ENCODE measurements at regions of chr17 and their contacts with region 1.

Region 1: DNA sequence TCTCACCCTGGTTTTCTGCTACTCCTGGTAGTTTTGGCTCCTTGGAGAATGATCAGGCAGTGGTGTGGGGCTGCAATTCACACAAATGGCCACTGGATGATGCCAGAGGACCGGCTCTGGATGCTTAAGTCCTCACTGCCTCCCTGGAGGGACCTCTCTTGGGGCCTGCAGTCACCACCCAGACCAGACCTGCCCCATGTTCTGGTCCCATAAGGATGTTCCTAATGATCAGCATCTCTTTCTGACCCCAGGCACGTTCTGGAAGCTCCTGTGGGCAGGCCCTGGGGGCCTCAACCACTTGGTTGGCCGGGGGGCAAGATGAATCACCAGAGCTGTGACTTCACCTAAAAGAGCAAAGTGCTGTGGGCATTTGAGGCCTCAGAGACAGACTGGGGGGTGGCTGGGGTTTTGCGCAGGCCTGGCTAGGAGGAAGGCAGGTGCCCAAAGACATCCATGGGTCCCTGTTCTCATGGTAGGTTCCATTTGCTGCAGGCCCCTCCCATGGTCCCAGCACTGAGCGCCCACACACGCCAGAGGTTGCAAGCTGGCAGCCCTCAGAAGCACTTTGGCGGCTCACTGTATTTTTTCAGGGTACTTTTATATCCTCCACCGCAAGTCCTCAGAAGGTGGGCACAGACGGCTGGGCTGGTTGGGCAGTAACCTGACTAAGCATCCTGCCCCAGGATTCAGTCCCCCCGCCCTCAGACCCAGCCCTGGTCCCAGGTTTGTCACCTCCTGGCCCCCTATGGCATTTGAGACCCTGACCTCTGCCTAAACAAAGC is 53.2 kb downstream of the NT5M start:
- DNase-seq: peak; percentile 47 to 84 (median 61)
- ATAC-seq: peak; percentile 84
- H3K4me3 ChIP-seq: no peak overlapping the region
- H3K4me3 Mint-ChIP-seq: no peak overlapping the region
- H3K27ac ChIP-seq: no peak overlapping the region
- H3K27ac Mint-ChIP-seq: no peak overlapping the region
- H3K4me1 ChIP-seq: peaks cover 5% of the 10 kb centered on the region
- H3K4me1 Mint-ChIP-seq: no peaks in the 10 kb centered on the region
- H3K27me3 ChIP-seq: peaks cover 0 to 2% of the 10 kb centered on the region in 2 experiments
- H3K27me3 Mint-ChIP-seq: peaks cover 3% of the 10 kb centered on the region
- CTCF ChIP-seq: peak; percentile 97

Region 2: DNA sequence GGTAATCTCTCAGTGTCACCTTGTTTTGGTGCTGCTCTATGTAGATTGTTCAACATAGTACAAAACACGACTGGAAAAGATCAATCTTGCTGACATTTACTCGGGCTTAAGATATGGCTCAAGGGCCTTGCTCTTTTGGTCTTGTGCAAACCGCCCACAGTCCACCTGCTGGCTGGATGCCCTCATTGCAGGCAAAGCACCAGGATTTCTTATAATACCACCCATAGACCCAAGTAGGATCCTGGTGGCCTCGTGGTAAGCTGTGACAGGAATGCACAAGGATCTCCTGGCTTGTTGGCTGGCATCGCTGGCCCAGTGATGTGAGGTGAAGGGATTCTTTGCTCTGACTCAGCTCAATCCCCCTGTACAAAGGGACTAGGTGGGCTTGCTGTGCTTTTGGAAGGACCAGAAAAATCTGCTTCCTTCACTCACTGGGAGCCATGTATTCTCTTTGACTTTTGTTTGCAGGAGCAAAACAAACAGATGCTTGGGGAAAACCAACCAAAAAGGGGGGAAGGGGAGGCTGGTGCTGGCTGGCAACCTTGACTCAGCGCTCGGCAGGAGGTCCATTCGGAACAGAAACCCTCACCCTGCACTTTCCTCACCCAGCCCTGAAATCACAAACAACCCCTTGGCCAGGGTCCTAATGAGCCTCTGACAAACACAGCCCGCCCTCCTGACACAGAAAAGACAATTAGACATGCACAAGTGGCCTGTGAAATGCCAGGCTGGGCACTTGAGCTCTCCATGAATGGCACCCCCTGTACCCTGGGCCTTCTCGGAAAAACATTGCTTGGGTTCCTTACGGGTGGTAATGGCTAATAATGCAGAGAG is 83.9 kb after region 1 on chr17:
- CTCF ChIA-PET with region 1: interaction called, 7 read pairs
- POLR2A ChIA-PET with region 1: interaction called, 3 read pairs
- intact Hi-C with region 1: loop called (anchors 1 kb)
- DNase-seq: peak; percentile 58 to 88 (median 73)
- ATAC-seq: peak; percentile 67
- H3K4me3 ChIP-seq: no peak overlapping the region
- H3K4me3 Mint-ChIP-seq: no peak overlapping the region
- H3K27ac ChIP-seq: no peak overlapping the region
- H3K27ac Mint-ChIP-seq: no peak overlapping the region
- H3K4me1 ChIP-seq: peaks cover 6% of the 10 kb centered on the region
- H3K4me1 Mint-ChIP-seq: peaks cover 11% of the 10 kb centered on the region
- H3K27me3 ChIP-seq: no peaks in the 10 kb centered on the region
- H3K27me3 Mint-ChIP-seq: no peaks in the 10 kb centered on the region
- CTCF ChIP-seq: peak; percentile 83

Region 3: DNA sequence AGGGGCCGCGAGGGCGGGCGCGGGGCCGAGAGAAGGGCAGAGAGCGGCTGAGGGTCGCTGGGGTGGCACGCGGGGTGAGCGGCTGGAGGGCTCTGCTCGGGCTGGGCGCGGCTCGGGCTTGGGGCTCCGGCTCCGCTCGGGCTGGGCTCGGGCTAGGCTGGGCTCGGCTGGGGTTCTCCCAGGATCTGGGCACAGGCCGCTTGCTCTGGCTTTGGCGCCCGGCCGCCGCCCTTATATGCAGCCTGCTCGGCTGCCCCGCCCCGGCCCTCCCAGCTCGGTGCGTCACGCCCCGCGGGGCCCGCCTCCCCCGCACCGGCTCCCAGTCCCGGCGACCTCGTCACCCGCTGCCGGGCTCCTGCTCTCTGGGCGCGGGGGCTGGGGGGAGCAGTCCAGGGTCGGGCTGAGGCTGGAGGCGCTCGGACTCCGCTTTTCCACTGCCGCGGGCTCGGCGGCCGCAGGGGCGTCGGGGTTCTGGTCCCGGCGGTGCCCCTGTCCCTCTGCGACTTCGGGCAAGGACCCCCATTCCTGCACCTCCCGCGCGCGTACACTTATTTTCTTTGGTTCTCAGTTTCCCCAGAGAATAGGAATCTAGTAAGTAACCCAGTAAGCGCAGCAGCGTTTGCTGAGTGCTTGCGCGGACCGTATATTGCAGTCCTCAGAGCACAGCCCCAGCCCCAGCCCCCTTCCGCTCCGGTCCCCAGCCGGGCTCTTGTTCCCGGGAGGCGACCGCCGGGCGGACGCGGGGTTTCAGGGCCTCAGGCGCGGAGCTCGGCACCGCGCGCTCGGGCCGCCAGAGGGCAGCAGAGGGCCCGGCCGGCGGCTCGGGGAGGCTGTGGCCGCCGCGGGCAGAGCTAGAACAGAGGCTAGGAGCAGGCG is 140.1 kb after region 1 on chr17 and contains the start of gene RASD1:
- CTCF ChIA-PET with region 1: interaction called, 4 read pairs
- POLR2A ChIA-PET with region 1: no interaction called
- intact Hi-C with region 1: loop called (anchors 1 kb)
- DNase-seq: peak; percentile 56 to 90 (median 72)
- ATAC-seq: peak; percentile 85
- H3K4me3 ChIP-seq: peak within 1 kb of the TSS; percentile 65
- H3K4me3 Mint-ChIP-seq: peak within 1 kb of the TSS; percentile 82
- H3K27ac ChIP-seq: no peak within 1 kb of the TSS
- H3K27ac Mint-ChIP-seq: no peak within 1 kb of the TSS
- H3K4me1 ChIP-seq: peaks cover 24% of the 10 kb centered on the region
- H3K4me1 Mint-ChIP-seq: peaks cover 7% of the 10 kb centered on the region
- H3K27me3 ChIP-seq: peaks cover 8 to 11% of the 10 kb centered on the region in 2 experiments
- H3K27me3 Mint-ChIP-seq: peaks cover 10% of the 10 kb centered on the region
- CTCF ChIP-seq: peak; percentile 92
- total RNA-seq, gene RASD1: 1.8 to 2.0 TPM

Region 4: DNA sequence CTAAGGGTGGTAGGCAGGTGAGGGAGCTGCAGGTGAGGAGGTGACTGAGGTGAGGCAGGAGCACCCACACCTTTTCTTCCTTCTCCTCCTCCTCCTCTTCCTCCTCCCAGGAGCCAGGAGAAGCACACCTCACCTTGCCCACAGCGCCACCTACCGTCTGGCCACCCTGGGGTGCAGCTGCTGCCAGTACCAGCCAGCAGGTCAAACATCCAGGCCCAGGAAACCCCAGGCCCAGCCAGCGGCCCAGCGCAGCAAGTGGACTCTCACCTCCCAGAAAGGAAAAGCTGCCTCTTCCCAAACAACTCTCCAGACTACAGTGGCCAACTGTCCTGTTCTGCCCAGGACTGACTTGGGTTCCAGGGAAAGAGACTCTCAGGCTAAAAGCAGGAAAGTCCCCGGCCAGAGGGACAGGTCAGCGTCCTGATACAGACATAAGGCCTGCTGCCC is 212.4 kb after region 1 on chr17:
- CTCF ChIA-PET with region 1: no interaction called
- POLR2A ChIA-PET with region 1: no interaction called
- intact Hi-C with region 1: loop called (anchors 1 to 2 kb)
- DNase-seq: peak; percentile 16 to 64 (median 38)
- ATAC-seq: no peak
- H3K4me3 ChIP-seq: no peak overlapping the region
- H3K4me3 Mint-ChIP-seq: no peak overlapping the region
- H3K27ac ChIP-seq: no peak overlapping the region
- H3K27ac Mint-ChIP-seq: no peak overlapping the region
- H3K4me1 ChIP-seq: no peaks in the 10 kb centered on the region
- H3K4me1 Mint-ChIP-seq: no peaks in the 10 kb centered on the region
- H3K27me3 ChIP-seq: no peaks in the 10 kb centered on the region
- H3K27me3 Mint-ChIP-seq: no peaks in the 10 kb centered on the region
- CTCF ChIP-seq: no peak

Region 5: GRCh38 chr17:17613708-17614114 is 257.4 kb after region 1 on chr17:
- CTCF ChIA-PET with region 1: interaction called, 3 read pairs
- POLR2A ChIA-PET with region 1: no interaction called
- intact Hi-C with region 1: loop called in 1 of 2 experiments (anchors 1 kb)
- DNase-seq: peak in 12 of 14 experiments; percentile 18 to 71 (median 32)
- ATAC-seq: peak; percentile 98
- H3K4me3 ChIP-seq: no peak overlapping the region
- H3K4me3 Mint-ChIP-seq: no peak overlapping the region
- H3K27ac ChIP-seq: no peak overlapping the region
- H3K27ac Mint-ChIP-seq: no peak overlapping the region
- H3K4me1 ChIP-seq: no peaks in the 10 kb centered on the region
- H3K4me1 Mint-ChIP-seq: no peaks in the 10 kb centered on the region
- H3K27me3 ChIP-seq: no peaks in the 10 kb centered on the region
- H3K27me3 Mint-ChIP-seq: no peaks in the 10 kb centered on the region
- CTCF ChIP-seq: peak; percentile 63

Region 6: DNA sequence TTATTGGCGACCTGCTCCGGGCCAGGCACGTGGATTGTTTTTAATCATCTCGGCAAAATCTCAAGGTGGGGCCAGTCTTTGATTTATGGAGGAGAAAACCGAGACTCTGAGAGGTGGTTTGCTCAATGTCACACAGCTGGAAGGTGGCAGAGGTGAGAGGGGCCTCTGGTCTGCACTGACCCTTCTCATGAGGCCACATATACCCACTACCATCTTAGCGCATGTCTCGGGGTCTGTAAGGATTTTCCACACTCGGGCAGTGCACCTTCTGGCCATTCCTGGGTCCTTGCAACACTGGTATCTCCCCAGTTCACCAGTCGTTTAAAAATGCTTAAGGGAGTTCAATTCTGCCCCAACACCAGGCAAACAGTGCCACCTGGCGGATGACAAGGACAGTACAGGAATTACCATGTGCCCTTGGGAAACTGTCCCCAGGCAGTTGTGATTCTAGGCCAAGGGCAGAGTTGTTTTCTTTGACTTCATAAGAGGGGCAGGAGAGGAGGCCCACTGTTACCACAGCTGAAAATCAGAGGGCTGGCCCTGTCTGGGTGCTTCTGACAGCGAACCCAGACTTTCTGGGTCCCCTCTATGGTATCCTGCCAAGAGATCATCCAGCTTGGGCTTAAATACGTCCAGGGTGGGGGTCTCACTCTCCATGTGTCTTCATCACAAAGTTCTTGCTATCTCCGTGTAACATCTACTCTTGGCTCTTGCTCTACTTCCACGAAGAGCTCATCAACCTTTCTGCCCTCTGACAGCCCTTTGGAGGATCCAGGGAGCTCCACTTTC is 285.5 kb after region 1 on chr17:
- CTCF ChIA-PET with region 1: interaction called, 22 read pairs
- POLR2A ChIA-PET with region 1: no interaction called
- intact Hi-C with region 1: loop called (anchors 1 kb)
- DNase-seq: peak; percentile 65 to 90 (median 78)
- ATAC-seq: peak; percentile 89
- H3K4me3 ChIP-seq: no peak overlapping the region
- H3K4me3 Mint-ChIP-seq: no peak overlapping the region
- H3K27ac ChIP-seq: no peak overlapping the region
- H3K27ac Mint-ChIP-seq: no peak overlapping the region
- H3K4me1 ChIP-seq: peaks cover 4% of the 10 kb centered on the region
- H3K4me1 Mint-ChIP-seq: no peaks in the 10 kb centered on the region
- H3K27me3 ChIP-seq: no peaks in the 10 kb centered on the region
- H3K27me3 Mint-ChIP-seq: peaks cover 8% of the 10 kb centered on the region
- CTCF ChIP-seq: peak; percentile 92

Region 7: DNA sequence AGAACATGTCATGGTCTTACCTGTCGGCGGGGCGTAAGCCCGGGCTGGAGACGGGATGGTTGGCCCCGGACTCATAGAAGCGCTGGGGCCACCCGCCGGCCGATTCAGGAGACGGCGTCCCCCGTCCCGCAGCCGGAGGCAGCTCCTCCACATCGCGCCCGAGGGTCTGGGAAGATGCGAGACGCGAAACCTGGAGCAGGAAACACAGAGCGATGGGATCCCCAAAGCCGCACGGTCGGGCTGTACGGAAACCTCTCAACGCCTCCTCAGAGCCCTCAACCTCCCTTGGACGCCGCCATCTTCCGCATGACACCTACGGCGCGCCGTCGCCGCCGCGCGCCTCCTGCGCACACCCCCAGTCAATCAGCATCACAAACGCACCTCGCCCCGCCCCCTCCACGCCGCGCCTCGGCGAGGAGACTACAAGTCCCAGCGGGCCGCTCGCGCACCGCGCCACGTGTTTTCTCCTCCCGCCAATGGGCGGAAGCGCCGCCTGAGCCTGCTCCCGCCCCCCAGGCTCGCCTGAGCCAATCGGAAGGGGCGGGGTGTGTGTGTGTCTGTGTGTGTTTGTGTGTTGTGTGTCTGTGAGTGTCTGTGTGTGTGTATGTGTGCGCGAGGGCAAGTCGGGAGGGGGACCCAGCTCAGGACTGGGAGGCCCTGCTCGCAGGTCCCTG is 682.7 kb after region 1 on chr17 and contains the starts of genes ATPAF2 and GID4:
- CTCF ChIA-PET with region 1: no interaction called
- POLR2A ChIA-PET with region 1: no interaction called
- intact Hi-C with region 1: loop called in 1 of 2 experiments (anchors 5 kb)
- DNase-seq: peak; percentile 99 to 100 (median 100)
- ATAC-seq: peak; percentile 91
- H3K4me3 ChIP-seq: peak within 1 kb of the TSS; percentile 93
- H3K4me3 Mint-ChIP-seq: peak within 1 kb of the TSS; percentile 100
- H3K27ac ChIP-seq: peak within 1 kb of the TSS; percentile 72 to 74
- H3K27ac Mint-ChIP-seq: peak within 1 kb of the TSS; percentile 91
- H3K4me1 ChIP-seq: peaks cover 34% of the 10 kb centered on the region
- H3K4me1 Mint-ChIP-seq: peaks cover 54% of the 10 kb centered on the region
- H3K27me3 ChIP-seq: no peaks in the 10 kb centered on the region
- H3K27me3 Mint-ChIP-seq: no peaks in the 10 kb centered on the region
- CTCF ChIP-seq: no peak
- total RNA-seq, gene ATPAF2: 20.8 to 21.9 TPM
- total RNA-seq, gene GID4: 3.4 to 3.7 TPM